ENCODE measurements at regions of chr3 and their contacts with region 1.

Region 1: DNA sequence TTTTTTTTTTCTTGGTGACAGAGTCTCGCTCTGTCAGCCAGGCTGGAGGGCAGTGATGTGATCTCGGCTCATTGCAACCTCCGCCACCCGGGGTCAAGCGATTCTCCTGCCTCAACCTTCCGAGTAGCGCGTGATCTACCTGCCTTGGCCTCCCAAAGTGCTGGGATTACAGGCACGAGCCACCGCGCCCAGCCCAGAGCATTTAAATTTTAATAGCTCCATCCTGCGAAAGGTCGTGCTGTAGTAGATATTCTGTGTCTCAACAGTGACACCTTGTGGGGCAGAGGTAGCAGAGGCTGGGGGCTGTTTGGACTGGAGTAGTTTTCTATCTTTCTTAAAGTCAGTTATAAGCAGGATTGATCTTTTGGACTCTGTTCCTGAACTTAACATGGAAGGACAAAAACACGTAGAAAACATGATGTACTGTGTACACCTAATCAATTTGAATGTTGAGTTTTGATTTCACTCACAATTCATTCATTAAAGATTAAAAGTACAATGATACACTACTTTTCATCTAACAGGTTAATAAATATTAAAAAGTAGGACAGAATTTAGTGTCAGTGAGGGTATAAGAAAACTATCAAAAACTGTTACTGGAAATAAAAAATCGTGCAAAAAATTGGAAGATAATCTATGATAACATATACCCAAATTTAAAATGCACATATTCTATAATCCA is 11.0 kb upstream of the PDCD6IP start:
- DNase-seq: peak; percentile 17
- ATAC-seq: peak; percentile 95
- H3K4me3 Mint-ChIP-seq: peak overlapping the region; percentile 26
- H3K27ac Mint-ChIP-seq: no peak overlapping the region
- H3K4me1 Mint-ChIP-seq: peaks cover 13% of the 10 kb centered on the region
- H3K27me3 Mint-ChIP-seq: no peaks in the 10 kb centered on the region
- CTCF ChIP-seq: no peak

Region 2: DNA sequence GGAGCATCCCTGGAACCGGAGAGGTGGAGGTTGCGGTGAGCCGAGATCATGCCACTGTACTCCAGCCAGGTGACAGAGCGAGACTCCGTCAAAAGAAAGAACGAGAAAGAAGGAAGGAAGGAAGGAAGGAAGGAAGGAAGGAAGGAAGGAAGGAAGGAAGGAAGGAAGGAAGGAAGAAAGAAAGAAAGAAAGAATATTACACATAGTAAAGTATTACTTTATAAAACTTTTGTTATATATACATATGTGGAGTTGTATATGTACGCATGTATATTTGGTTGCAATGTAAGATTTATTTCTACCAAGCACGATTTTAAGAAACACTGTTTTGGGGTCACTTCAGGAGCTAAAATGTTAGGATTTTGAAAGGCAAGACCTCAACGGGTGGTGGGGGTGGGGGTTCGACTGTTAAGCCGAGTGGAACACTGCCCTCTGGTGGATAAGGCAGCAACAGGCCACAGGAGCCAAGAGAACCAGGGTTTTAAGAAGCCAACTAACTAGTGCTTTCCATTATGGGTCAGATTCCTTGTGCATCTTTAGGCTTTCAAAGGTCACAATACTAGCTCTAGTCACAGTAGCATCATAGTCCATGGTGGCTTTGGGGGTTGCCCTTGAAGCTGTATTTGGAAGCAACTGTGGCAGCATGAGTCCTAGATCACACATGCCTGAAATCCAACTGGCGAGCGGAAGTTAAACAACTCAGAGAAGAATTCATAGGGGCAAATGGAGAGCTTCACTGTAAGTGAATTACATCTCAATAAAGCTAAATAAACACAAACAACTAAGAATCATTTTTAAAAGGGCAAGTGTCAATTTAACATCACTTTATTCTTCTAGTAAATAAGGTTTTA is 713.0 kb before region 1 on chr3:
- CTCF ChIA-PET with region 1: no interaction called
- POLR2A ChIA-PET with region 1: no interaction called
- intact Hi-C with region 1: loop called (anchors 1 kb)
- DNase-seq: peak; percentile 33
- ATAC-seq: peak; percentile 84
- H3K4me3 Mint-ChIP-seq: no peak overlapping the region
- H3K27ac Mint-ChIP-seq: no peak overlapping the region
- H3K4me1 Mint-ChIP-seq: peaks cover 17% of the 10 kb centered on the region
- H3K27me3 Mint-ChIP-seq: no peaks in the 10 kb centered on the region
- CTCF ChIP-seq: no peak

Region 3: GRCh38 chr3:33372218-33373081 is 415.0 kb before region 1 on chr3:
- CTCF ChIA-PET with region 1: interaction called, 11 read pairs
- POLR2A ChIA-PET with region 1: no interaction called
- intact Hi-C with region 1: loop called (anchors 10 kb)
- DNase-seq: no peak
- ATAC-seq: peak; percentile 54
- H3K4me3 Mint-ChIP-seq: no peak overlapping the region
- H3K27ac Mint-ChIP-seq: no peak overlapping the region
- H3K4me1 Mint-ChIP-seq: peaks cover 2% of the 10 kb centered on the region
- H3K27me3 Mint-ChIP-seq: peaks cover 4% of the 10 kb centered on the region
- CTCF ChIP-seq: peak; percentile 80

Region 4: DNA sequence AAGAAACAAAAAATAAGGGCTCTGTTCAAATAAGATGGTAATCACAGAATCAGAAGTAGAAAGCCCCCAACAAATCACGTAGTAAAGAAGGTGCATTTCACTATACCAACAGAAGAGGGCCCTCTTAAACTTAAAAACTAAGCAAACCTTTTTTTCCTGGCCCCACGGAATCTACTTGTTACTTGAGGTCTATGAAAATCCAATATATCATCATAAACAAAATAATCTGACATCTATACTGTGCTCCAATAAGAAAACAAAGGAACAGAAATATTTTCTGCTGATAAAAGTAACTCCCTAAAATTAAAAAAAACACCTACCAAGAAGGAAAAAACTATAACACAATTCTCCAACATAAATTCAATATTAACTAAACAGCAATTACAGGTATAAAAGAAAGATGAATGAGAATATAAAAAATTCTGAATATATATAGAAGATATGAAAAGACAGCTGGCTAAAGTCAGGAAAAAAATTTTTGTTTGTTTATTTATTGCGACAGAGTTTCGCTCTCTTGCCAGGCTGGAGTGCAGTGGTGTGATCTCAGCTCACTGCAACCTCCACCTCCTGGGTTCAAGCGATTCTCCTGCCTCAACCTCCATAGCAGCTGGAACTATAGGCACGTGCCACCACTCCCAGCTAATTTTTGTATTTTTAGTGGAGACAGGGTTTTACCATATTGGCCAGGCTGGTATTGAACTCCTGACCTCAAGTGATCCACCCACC is 151.2 kb before region 1 on chr3:
- CTCF ChIA-PET with region 1: interaction called, 29 read pairs
- POLR2A ChIA-PET with region 1: no interaction called
- intact Hi-C with region 1: loop called (anchors 1 kb)
- DNase-seq: no peak
- ATAC-seq: no peak
- H3K4me3 Mint-ChIP-seq: no peak overlapping the region
- H3K27ac Mint-ChIP-seq: no peak overlapping the region
- H3K4me1 Mint-ChIP-seq: no peaks in the 10 kb centered on the region
- H3K27me3 Mint-ChIP-seq: no peaks in the 10 kb centered on the region
- CTCF ChIP-seq: peak; percentile 31

Region 5: DNA sequence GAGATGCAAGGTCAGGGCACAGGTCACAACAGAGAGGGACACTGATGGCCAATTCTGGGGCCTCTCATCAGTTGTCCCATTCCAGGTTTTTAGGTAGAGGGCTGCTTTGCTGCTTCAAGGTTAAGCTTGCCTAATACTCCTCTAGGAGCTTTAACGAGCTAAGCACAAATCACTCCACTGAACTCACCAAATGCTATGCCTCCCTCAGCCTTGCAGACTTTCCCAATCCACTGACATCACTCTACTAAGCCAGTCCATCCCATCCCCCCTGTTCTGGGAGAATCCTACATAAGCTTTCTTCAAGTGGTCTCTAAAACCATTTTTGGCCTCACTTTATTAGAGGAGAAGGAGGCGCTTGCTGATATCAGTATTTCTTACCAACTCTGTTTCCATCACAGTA is 13.8 kb before region 1 on chr3:
- CTCF ChIA-PET with region 1: interaction called, 29 read pairs
- POLR2A ChIA-PET with region 1: no interaction called
- intact Hi-C with region 1: no loop called
- DNase-seq: no peak
- ATAC-seq: no peak
- H3K4me3 Mint-ChIP-seq: no peak overlapping the region
- H3K27ac Mint-ChIP-seq: no peak overlapping the region
- H3K4me1 Mint-ChIP-seq: no peaks in the 10 kb centered on the region
- H3K27me3 Mint-ChIP-seq: peaks cover 2% of the 10 kb centered on the region
- CTCF ChIP-seq: no peak

Region 6: DNA sequence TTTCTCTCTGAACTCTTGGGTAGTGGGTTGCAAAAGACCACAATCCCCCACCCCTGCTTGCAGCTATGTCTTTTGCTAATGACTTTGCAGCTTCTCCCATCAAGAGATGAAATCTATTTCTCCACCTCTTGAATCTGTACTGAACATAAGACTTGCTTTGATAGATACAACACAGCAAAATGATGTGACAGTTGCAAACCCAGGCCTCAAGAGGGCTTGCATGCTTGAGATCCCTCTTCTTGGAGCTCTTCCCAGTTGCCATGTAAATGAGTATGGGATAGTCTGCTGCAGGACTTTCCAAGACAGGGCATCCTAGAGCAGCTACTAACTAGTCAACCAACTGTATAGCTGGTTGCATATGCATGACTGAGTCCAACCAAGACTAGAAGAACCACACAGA is 794.6 kb after region 1 on chr3:
- CTCF ChIA-PET with region 1: no interaction called
- POLR2A ChIA-PET with region 1: no interaction called
- intact Hi-C with region 1: no loop called
- DNase-seq: no peak
- ATAC-seq: no peak
- H3K4me3 Mint-ChIP-seq: no peak overlapping the region
- H3K27ac Mint-ChIP-seq: no peak overlapping the region
- H3K4me1 Mint-ChIP-seq: no peaks in the 10 kb centered on the region
- H3K27me3 Mint-ChIP-seq: no peaks in the 10 kb centered on the region
- CTCF ChIP-seq: no peak

Measured in activated B cell treated with CpG ODN at 0.5 μM for 24 hours (primary cell).